Left colon (tissue), 2 donors: ENCODE measurements at regions of chr12 and their contacts with region 1.

Region 1: GRCh38 chr12:46661110-46661845 is 164.5 kb downstream of the SLC38A4 start:
- DNase-seq: no peak
- ATAC-seq: peak; percentile 97

Region 2: GRCh38 chr12:46147144-46147543 is 514.1 kb before region 1 on chr12:
- intact Hi-C with region 1: loop called in 1 of 2 experiments (anchors 10 kb)
- DNase-seq: no peak
- ATAC-seq: no peak

Region 3: GRCh38 chr12:46711756-46712155 is 50.5 kb after region 1 on chr12:
- intact Hi-C with region 1: no loop called
- DNase-seq: no peak
- ATAC-seq: no peak